ENCODE measurements at regions of chr9 and their contacts with region 1.

Region 1: DNA sequence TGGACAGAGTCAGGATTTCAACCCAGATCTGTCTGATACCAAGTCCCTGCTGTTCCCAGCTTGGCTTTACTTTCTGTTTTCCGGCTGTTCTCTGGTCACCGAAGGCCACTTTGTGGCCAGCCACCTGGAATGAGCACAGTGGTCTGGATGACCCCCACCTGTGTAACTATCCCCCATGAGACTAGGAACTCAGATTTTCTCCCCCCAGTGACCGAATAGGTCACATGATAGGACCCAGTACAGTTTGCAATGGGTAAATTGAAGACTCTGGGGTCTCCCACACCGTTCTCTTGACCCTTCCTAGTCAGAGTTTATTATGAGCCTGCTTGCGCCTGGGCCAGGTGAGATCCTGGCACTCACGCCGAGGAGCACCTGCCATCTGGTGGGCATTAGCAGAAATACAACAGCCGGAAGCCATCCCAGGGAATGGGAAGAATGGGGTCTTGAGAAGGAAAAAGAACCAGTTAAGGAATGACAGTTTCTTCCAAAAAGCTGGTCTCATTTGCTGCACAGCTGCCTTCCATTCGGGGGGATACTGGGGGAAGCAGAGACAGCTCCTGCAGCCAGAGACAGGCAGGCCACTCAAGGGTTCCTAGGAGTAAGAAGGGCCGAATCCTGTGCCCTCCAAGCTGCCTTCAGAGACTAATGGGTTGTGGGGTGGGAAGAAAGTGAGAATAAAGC is 7.1 kb downstream of the PHYHD1 start:
- DNase-seq: no peak
- ATAC-seq: peak; percentile 83

Region 2: GRCh38 chr9:128669786-128670185 is 258.1 kb before region 1 on chr9:
- intact Hi-C with region 1: no loop called
- DNase-seq: no peak
- ATAC-seq: no peak

Region 3: GRCh38 chr9:128863647-128864046 is 64.2 kb before region 1 on chr9:
- intact Hi-C with region 1: loop called (anchors 2 kb)
- DNase-seq: peak; percentile 88
- ATAC-seq: peak; percentile 91

Region 4: GRCh38 chr9:129235931-129236331 is 308.1 kb after region 1 on chr9:
- intact Hi-C with region 1: no loop called
- DNase-seq: no peak
- ATAC-seq: no peak

Measured in Right ventricle myocardium superior (tissue), 1 donor.